ENCODE measurements at regions of chr2 and their contacts with region 1.

Region 1: GRCh38 chr2:113889471-113890252 is at the start of gene ACTR3:
- DNase-seq: peak; percentile 98
- ATAC-seq: peak; percentile 90
- H3K4me3 ChIP-seq: peak within 1 kb of the TSS; percentile 84
- H3K27ac ChIP-seq: peak within 1 kb of the TSS; percentile 100
- H3K4me1 ChIP-seq: peaks cover 8% of the 10 kb centered on the region
- H3K27me3 ChIP-seq: no peaks in the 10 kb centered on the region
- CTCF ChIP-seq: no peak
- POLR2A ChIP-seq: peak; percentile 98
- RAD21 ChIP-seq: peak; percentile 20
- total RNA-seq, gene ACTR3: 307 and 645 TPM in 2 replicates

Region 2: GRCh38 chr2:113756355-113757137 is 133.1 kb before region 1 on chr2 and contains the start of gene SLC35F5:
- CTCF ChIA-PET with region 1: no interaction called
- POLR2A ChIA-PET with region 1: interaction called, 7 read pairs
- dilution Hi-C with region 1: no loop called
- in situ Hi-C with region 1: loop called (anchors 5 kb)
- intact Hi-C with region 1: loop called (anchors 1 kb)
- DNase-seq: peak; percentile 86
- ATAC-seq: peak; percentile 98
- H3K4me3 ChIP-seq: peak within 1 kb of the TSS; percentile 87
- H3K27ac ChIP-seq: peak within 1 kb of the TSS; percentile 99
- H3K4me1 ChIP-seq: 0 out of 2 replicates have a peak, but pooled peaks cover 2% of the 10 kb centered on the region
- H3K27me3 ChIP-seq: no peaks in the 10 kb centered on the region
- CTCF ChIP-seq: no peak
- POLR2A ChIP-seq: peak; percentile 89
- RAD21 ChIP-seq: no peak
- total RNA-seq, gene SLC35F5: 93.4 and 106 TPM in 2 replicates

Region 3: GRCh38 chr2:113818382-113818951 is 71.2 kb before region 1 on chr2:
- CTCF ChIA-PET with region 1: no interaction called
- POLR2A ChIA-PET with region 1: interaction called, 3 read pairs
- dilution Hi-C with region 1: no loop called
- in situ Hi-C with region 1: no loop called
- intact Hi-C with region 1: loop called (anchors 2 kb)
- DNase-seq: peak; percentile 100
- ATAC-seq: peak; percentile 98
- H3K4me3 ChIP-seq: peak overlapping the region; percentile 1; the same call in 1 of the 2 replicates
- H3K27ac ChIP-seq: peak overlapping the region; percentile 72
- H3K4me1 ChIP-seq: peaks cover 9% of the 10 kb centered on the region
- H3K27me3 ChIP-seq: no peaks in the 10 kb centered on the region
- CTCF ChIP-seq: no peak
- POLR2A ChIP-seq: no peak
- RAD21 ChIP-seq: peak; percentile 44; the same call in 1 of the 2 replicates

Region 4: GRCh38 chr2:113872201-113872600 is 17.5 kb before region 1 on chr2:
- CTCF ChIA-PET with region 1: no interaction called
- POLR2A ChIA-PET with region 1: interaction called, 3 read pairs
- dilution Hi-C with region 1: no loop called
- in situ Hi-C with region 1: no loop called
- intact Hi-C with region 1: loop called (anchors 2 kb)
- DNase-seq: peak; percentile 80
- ATAC-seq: peak; percentile 85
- H3K4me3 ChIP-seq: no peak overlapping the region
- H3K27ac ChIP-seq: no peak overlapping the region
- H3K4me1 ChIP-seq: peaks cover 4% of the 10 kb centered on the region; the same call in 1 of the 2 replicates
- H3K27me3 ChIP-seq: no peaks in the 10 kb centered on the region
- CTCF ChIP-seq: no peak
- POLR2A ChIP-seq: no peak
- RAD21 ChIP-seq: no peak

Region 5: GRCh38 chr2:113901943-113902342 is 12.3 kb after region 1 on chr2:
- CTCF ChIA-PET with region 1: no interaction called
- POLR2A ChIA-PET with region 1: no interaction called
- dilution Hi-C with region 1: no loop called
- in situ Hi-C with region 1: no loop called
- intact Hi-C with region 1: no loop called
- DNase-seq: no peak
- ATAC-seq: no peak
- H3K4me3 ChIP-seq: no peak overlapping the region
- H3K27ac ChIP-seq: no peak overlapping the region
- H3K4me1 ChIP-seq: peaks cover 15% of the 10 kb centered on the region
- H3K27me3 ChIP-seq: no peaks in the 10 kb centered on the region
- CTCF ChIP-seq: no peak
- POLR2A ChIP-seq: no peak
- RAD21 ChIP-seq: no peak